Calu3 (cell line): ENCODE measurements at regions of chr4 and their contacts with region 1.

Region 1: GRCh38 chr4:164888096-164888715 is 11.2 kb downstream of the APELA start:
- DNase-seq: no peak
- H3K4me3 Mint-ChIP-seq: no peak overlapping the region
- H3K27ac Mint-ChIP-seq: no peak overlapping the region
- H3K4me1 Mint-ChIP-seq: no peaks in the 10 kb centered on the region
- H3K27me3 Mint-ChIP-seq: no peaks in the 10 kb centered on the region
- CTCF ChIP-seq: no peak

Region 2: GRCh38 chr4:164134388-164134787 is 753.8 kb before region 1 on chr4:
- CTCF ChIA-PET with region 1: no interaction called
- intact Hi-C with region 1: no loop called
- DNase-seq: no peak
- H3K4me3 Mint-ChIP-seq: no peak overlapping the region
- H3K27ac Mint-ChIP-seq: no peak overlapping the region
- H3K4me1 Mint-ChIP-seq: peaks cover 9% of the 10 kb centered on the region
- H3K27me3 Mint-ChIP-seq: no peaks in the 10 kb centered on the region
- CTCF ChIP-seq: no peak

Region 3: DNA sequence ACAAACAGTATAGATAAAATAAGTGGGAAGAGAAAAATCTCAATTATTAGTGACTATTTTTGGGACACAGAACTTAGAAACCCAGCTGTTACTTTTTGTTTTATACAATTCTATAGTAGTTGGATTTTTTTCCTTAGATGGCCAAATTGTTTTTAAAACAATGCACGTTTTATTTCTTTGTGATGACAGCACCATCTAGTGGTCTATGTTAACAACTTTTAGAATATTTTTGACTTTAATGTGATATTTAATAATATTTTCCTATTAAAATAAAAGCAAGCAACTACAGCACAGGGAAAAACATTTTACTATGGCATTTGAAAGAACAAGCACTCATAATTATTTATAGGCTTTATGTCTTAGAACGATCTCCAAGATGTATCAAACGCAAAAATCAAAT is 139.8 kb before region 1 on chr4:
- CTCF ChIA-PET with region 1: no interaction called
- intact Hi-C with region 1: no loop called
- DNase-seq: no peak
- H3K4me3 Mint-ChIP-seq: no peak overlapping the region
- H3K27ac Mint-ChIP-seq: no peak overlapping the region
- H3K4me1 Mint-ChIP-seq: no peaks in the 10 kb centered on the region
- H3K27me3 Mint-ChIP-seq: peaks cover 24% of the 10 kb centered on the region
- CTCF ChIP-seq: no peak

Region 4: GRCh38 chr4:164997324-164997723 is 109.1 kb after region 1 on chr4:
- CTCF ChIA-PET with region 1: no interaction called
- intact Hi-C with region 1: loop called (anchors 10 kb)
- DNase-seq: peak; percentile 15
- H3K4me3 Mint-ChIP-seq: no peak overlapping the region
- H3K27ac Mint-ChIP-seq: no peak overlapping the region
- H3K4me1 Mint-ChIP-seq: no peaks in the 10 kb centered on the region
- H3K27me3 Mint-ChIP-seq: no peaks in the 10 kb centered on the region
- CTCF ChIP-seq: peak; percentile 20